ENCODE measurements at regions of chr12 and their contacts with region 1.

Region 1: DNA sequence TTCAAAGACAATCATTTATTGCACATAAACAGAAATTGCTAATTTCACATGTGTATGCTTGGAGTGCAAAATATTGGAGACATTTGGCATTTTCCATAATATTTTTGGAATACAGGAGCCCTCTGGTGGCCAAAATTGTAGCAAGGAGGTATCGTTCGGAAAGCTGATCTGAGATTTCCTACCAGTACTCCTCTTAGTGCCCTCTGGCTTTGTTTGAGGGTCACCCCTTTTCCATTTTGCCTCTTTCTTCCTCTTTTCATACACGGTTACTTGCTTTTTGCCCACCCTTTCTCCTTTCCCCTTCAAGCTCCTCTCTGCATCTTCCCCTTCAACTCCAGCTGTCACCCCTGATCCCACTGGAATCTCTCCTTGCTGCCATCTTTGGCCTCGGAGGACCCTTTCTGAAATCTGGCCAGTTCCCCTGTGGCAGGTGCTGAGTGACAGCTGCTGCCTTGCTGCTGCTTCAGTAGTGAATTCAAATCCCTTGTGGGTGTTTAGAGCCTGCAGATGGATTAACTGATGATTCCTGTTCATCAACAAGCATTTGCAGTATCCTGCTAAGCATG is 164.6 kb upstream of the PARP11 start:
- DNase-seq: peak; percentile 58
- ATAC-seq: no peak; the same call in 1 of the 2 replicates
- H3K4me3 ChIP-seq: no peak overlapping the region
- H3K27ac ChIP-seq: no peak overlapping the region
- H3K4me1 ChIP-seq: peaks cover 8% of the 10 kb centered on the region; the same call in 1 of the 2 replicates
- H3K27me3 ChIP-seq: peaks cover 10% of the 10 kb centered on the region
- CTCF ChIP-seq: peak; percentile 68

Region 2: DNA sequence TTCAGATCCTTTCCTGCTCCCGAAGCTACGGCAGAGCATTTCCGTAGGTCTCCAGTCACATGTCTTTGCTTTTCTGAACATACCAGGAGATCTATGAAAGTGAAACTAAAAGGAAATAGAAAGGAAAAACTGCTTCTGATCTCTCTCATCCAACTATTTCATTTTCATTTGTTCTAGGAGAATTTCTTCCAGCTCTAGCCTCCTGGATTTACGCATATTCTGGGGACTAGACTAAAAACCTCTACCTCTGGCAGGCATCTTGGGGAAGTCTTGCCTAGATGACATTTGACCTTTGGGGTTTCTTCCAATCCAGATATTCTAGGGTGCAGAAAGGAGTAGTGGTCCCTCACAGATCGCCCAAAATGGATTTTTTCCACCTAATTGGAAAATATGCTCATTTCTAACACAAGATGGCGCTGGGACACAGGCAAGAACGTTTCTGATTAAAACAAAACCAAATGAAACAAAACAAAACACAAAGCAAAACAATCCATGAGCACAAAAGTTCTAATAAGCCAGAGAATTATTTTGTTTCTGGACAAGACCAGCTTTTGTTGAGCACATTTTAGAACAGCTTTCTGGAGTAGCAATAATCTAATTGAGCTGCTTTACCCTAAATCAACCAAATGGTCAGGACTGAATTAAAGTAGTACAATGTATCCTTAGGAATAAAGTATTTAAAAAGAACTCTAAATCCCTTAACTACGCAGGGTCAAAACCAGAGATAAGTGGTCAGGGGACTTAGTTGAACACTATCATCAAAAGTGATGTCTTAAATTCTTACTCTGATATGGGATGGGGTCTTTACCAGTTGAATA is 152.3 kb before region 1 on chr12:
- CTCF ChIA-PET with region 1: interaction called, 3 read pairs
- POLR2A ChIA-PET with region 1: no interaction called
- intact Hi-C with region 1: loop called (anchors 1 kb)
- DNase-seq: peak; percentile 40
- ATAC-seq: no peak
- H3K4me3 ChIP-seq: no peak overlapping the region
- H3K27ac ChIP-seq: no peak overlapping the region
- H3K4me1 ChIP-seq: no peaks in the 10 kb centered on the region
- H3K27me3 ChIP-seq: peaks cover 31% of the 10 kb centered on the region
- CTCF ChIP-seq: peak; percentile 79

Region 3: DNA sequence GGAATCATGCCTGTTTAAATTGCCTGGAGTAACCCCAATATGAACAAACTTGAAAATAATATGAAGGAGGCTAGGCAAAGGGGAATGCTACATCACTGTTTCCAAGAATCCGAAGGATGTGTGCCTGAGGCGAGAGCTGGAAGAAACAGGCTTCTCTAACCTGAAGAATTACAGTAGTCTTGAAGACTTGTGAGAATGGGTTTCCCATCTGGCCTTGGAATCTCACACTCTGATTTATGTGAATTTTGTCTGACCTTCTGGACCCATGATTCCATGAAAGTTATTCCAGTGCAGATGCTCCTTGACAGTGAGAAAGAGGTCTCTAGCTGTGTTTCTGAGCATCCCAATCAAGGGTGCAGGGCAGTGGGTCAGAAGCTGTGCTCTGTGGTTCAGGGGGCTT is 42.5 kb before region 1 on chr12:
- CTCF ChIA-PET with region 1: interaction called, 3 read pairs
- POLR2A ChIA-PET with region 1: no interaction called
- intact Hi-C with region 1: loop called (anchors 2 kb)
- DNase-seq: no peak
- ATAC-seq: no peak
- H3K4me3 ChIP-seq: no peak overlapping the region
- H3K27ac ChIP-seq: no peak overlapping the region
- H3K4me1 ChIP-seq: no peaks in the 10 kb centered on the region
- H3K27me3 ChIP-seq: peaks cover 40% of the 10 kb centered on the region
- CTCF ChIP-seq: no peak